Aorta (tissue), 5 donors: ENCODE measurements at regions of chr6 and their contacts with region 1.

Region 1: GRCh38 chr6:42782622-42783176 is 847 bp downstream of the BICRAL start:
- DNase-seq: peak; percentile 90 to 94
- ATAC-seq: peak; percentile 90
- H3K4me3 ChIP-seq: peak overlapping the region; percentile 74 to 99
- H3K27ac ChIP-seq: peak overlapping the region; percentile 100
- H3K4me1 ChIP-seq: peaks cover 0 to 3% of the 10 kb centered on the region in 2 donors
- H3K27me3 ChIP-seq: no peaks in the 10 kb centered on the region

Region 2: GRCh38 chr6:42745707-42746462 is 36.8 kb before region 1 on chr6 and contains the start of gene TBCC:
- intact Hi-C with region 1: loop called (anchors 1 to 2 kb)
- DNase-seq: peak; percentile 97
- ATAC-seq: peak; percentile 96
- H3K4me3 ChIP-seq: peak within 1 kb of the TSS; percentile 51 to 83
- H3K27ac ChIP-seq: peak within 1 kb of the TSS; percentile 37 to 86
- H3K4me1 ChIP-seq: peaks cover 0 to 3% of the 10 kb centered on the region in 2 donors
- H3K27me3 ChIP-seq: no peaks in the 10 kb centered on the region
- total RNA-seq, gene TBCC: 16.1 to 16.8 TPM

Region 3: GRCh38 chr6:42819803-42820511 is 37.3 kb after region 1 on chr6:
- intact Hi-C with region 1: loop called in 1 of 2 experiments (anchors 5 kb)
- DNase-seq: no peak
- ATAC-seq: peak; percentile 62
- H3K4me3 ChIP-seq: no peak overlapping the region
- H3K27ac ChIP-seq: peak overlapping the region; percentile 15 to 69
- H3K4me1 ChIP-seq: peaks cover 0 to 4% of the 10 kb centered on the region in 2 donors
- H3K27me3 ChIP-seq: no peaks in the 10 kb centered on the region

Region 4: GRCh38 chr6:42841844-42842584 is 59.3 kb after region 1 on chr6:
- intact Hi-C with region 1: no loop called
- DNase-seq: no peak
- ATAC-seq: no peak
- H3K4me3 ChIP-seq: no peak overlapping the region
- H3K27ac ChIP-seq: no peak overlapping the region
- H3K4me1 ChIP-seq: no peaks in the 10 kb centered on the region
- H3K27me3 ChIP-seq: no peaks in the 10 kb centered on the region

Region 5: DNA sequence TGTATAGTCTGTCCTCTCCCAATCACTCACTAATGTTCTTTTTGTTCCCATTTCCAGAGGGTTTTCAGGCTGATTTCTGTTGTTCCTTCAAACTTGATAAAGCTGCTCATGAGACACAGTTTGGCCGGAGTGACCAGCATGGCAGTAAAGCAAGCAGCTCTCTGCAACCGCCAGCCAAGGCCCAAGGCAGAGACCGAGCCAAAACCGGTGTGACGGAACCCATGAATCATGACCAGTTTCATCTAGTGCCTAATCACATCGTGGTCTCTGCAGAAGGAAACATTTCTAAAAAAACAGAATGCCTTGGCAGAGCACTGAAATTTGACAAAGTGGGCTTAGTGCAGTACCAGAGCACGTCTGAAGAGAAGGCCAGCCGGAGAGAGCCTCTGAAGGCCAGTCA is 81.9 kb after region 1 on chr6:
- intact Hi-C with region 1: loop called in 1 of 2 experiments (anchors 5 kb)
- DNase-seq: peak; percentile 78 to 87
- ATAC-seq: peak; percentile 74
- H3K4me3 ChIP-seq: no peak overlapping the region
- H3K27ac ChIP-seq: peak overlapping the region; percentile 60 to 73
- H3K4me1 ChIP-seq: peaks cover 0 to 2% of the 10 kb centered on the region in 2 donors
- H3K27me3 ChIP-seq: no peaks in the 10 kb centered on the region